Left colon (tissue), 2 donors: ENCODE measurements at regions of chr1 and their contacts with region 1.

Region 1: DNA sequence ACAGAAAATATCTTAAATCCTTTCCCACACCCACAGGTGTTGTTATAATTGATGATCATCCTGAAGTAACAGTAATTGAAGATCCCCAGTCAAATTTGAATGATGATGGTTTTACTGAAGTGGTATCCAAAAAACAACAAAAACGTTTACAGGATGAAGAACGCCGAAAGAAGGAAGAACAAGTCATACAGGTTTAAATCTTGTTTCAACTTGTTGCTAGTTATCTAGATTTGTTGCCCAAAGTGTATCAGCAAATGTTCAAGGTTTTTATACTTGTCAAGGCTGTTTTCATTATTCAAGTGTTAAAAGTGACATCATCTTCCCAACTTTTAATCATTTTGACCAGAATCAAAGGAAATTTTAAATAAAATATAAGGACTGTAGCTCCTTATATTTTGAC is 64.7 kb downstream of the PRRC2C start:
- DNase-seq: no peak
- ATAC-seq: no peak

Region 2: GRCh38 chr1:171433451-171433850 is 116.6 kb before region 1 on chr1:
- intact Hi-C with region 1: no loop called
- DNase-seq: no peak
- ATAC-seq: no peak

Region 3: GRCh38 chr1:171494076-171494475 is 56.0 kb before region 1 on chr1:
- intact Hi-C with region 1: loop called in 1 of 2 experiments (anchors 10 kb)
- DNase-seq: no peak
- ATAC-seq: no peak